Activated naive CD4-positive, alpha-beta T cell treated with anti-CD3 and anti-CD28 coated beads for 36 hours (primary cell): ENCODE measurements at regions of chr10 and their contacts with region 1.

Region 1: DNA sequence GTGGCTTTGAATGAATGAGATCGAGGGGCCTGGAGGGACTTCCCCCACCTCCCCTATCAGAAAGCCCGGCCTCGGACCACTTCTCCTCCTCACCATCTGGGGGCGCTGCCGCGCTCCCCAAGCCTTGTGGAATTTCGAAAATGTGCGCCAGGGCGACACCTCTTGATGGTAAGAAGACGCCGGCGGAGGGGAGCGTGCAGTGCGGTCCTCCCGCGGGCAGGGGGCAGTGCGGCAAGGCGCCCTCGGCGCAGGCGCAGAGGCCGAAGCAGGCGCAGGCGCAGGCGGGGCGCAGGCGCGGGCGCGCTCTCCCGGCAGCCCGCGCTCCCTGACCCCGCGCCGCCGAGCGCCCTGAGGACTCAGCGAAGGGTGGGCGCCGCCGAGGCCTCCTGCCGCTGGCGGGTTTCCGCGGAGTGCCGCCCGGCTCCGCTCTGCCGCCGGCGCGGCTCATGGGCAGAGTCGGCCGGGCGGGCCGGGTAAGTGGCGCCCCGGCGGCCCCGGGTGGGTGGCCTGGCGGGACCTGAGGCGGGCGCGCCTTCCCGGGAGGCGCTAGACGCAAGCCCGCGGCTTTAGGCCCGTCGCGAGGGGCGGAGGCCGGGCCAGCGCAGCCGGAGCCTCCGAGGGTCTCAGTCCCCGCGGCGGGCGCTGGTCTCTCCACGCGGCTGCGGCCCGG is at the start of gene RBM17:
- DNase-seq: peak; percentile 98
- H3K4me3 Mint-ChIP-seq: peak within 1 kb of the TSS; percentile 92
- H3K27ac Mint-ChIP-seq: peak within 1 kb of the TSS; percentile 89
- H3K4me1 Mint-ChIP-seq: peaks cover 71% of the 10 kb centered on the region
- H3K27me3 Mint-ChIP-seq: no peaks in the 10 kb centered on the region
- total RNA-seq, gene RBM17: 157 to 162 TPM

Region 2: DNA sequence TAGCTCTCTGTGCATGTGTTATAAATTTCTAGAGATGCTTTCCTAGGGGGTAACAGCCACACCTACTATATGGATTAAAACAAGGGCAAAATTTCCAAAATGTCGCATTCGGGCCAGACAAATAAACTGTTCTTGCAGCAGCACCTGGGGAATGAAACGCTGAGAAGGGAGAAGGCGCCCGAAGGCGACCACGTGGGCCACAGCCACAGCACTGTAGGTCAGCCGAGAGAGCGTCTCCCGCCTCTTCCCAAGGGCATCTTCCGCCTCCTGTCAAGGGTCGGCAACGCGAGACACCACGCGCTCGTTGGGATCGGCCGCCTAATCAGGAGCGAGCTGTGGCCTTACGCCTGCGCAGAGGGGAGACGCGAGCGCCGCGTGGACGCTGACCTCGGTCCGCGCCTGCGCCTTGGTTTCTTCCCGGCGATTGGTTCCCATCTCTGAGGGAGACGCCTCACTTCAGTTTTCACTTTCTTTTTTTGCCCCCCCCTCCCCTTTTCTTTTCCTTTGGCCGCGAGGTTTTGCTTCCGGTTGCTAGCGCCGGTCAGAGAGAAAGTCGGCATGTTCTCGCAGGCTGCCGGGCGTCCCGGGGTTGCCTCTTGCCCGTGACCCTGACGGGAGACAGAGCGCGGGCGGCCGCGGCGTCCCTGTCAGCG is 404.4 kb before region 1 on chr10 and contains the start of gene TASOR2:
- CTCF ChIA-PET with region 1: no interaction called
- intact Hi-C with region 1: loop called (anchors 2 kb)
- DNase-seq: peak; percentile 98
- H3K4me3 Mint-ChIP-seq: peak within 1 kb of the TSS; percentile 87
- H3K27ac Mint-ChIP-seq: peak within 1 kb of the TSS; percentile 94
- H3K4me1 Mint-ChIP-seq: peaks cover 45% of the 10 kb centered on the region
- H3K27me3 Mint-ChIP-seq: no peaks in the 10 kb centered on the region
- total RNA-seq, gene TASOR2: 36.4 to 37.7 TPM

Region 3: DNA sequence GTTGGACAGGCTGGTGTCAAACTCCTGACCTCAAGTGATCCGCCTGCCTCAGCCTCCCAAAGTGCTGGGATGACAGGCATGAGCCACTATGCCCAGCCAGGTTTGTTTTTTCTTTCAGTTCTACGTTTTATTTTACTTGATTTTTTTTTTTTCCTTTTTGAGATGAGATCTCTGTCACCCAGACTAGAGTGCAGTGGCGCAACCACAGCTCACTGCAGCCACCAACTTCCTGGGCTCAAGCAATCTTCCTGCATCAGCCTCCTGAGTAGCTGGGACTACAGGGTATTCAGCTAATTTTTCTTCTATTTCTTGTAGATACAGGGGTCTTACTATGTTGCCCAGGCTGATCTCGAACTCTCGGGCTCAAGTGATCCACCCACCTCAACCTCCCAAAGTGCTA is 299.9 kb before region 1 on chr10:
- CTCF ChIA-PET with region 1: no interaction called
- intact Hi-C with region 1: no loop called
- DNase-seq: no peak
- H3K4me3 Mint-ChIP-seq: no peak overlapping the region
- H3K27ac Mint-ChIP-seq: no peak overlapping the region
- H3K4me1 Mint-ChIP-seq: peaks cover 12% of the 10 kb centered on the region
- H3K27me3 Mint-ChIP-seq: no peaks in the 10 kb centered on the region

Region 4: GRCh38 chr10:5948999-5949759 is 139.7 kb before region 1 on chr10:
- CTCF ChIA-PET with region 1: interaction called, 4 read pairs
- intact Hi-C with region 1: loop called (anchors 1 kb)
- DNase-seq: peak; percentile 78
- H3K4me3 Mint-ChIP-seq: no peak overlapping the region
- H3K27ac Mint-ChIP-seq: no peak overlapping the region
- H3K4me1 Mint-ChIP-seq: peaks cover 10% of the 10 kb centered on the region
- H3K27me3 Mint-ChIP-seq: no peaks in the 10 kb centered on the region

Region 5: GRCh38 chr10:6045314-6045848 is 43.5 kb before region 1 on chr10:
- CTCF ChIA-PET with region 1: interaction called, 77 read pairs
- intact Hi-C with region 1: no loop called
- DNase-seq: peak; percentile 69
- H3K4me3 Mint-ChIP-seq: peak overlapping the region; percentile 56
- H3K27ac Mint-ChIP-seq: peak overlapping the region; percentile 95
- H3K4me1 Mint-ChIP-seq: peaks cover 86% of the 10 kb centered on the region
- H3K27me3 Mint-ChIP-seq: no peaks in the 10 kb centered on the region

Region 6: GRCh38 chr10:6108603-6109443 is 20.0 kb after region 1 on chr10:
- CTCF ChIA-PET with region 1: interaction called, 4 read pairs
- intact Hi-C with region 1: loop called (anchors 2 kb)
- DNase-seq: peak; percentile 36
- H3K4me3 Mint-ChIP-seq: no peak overlapping the region
- H3K27ac Mint-ChIP-seq: peak overlapping the region; percentile 66
- H3K4me1 Mint-ChIP-seq: peaks cover 21% of the 10 kb centered on the region
- H3K27me3 Mint-ChIP-seq: no peaks in the 10 kb centered on the region